B cell (primary cell): ENCODE measurements at regions of chr10 and their contacts with region 1.

Region 1: GRCh38 chr10:25707976-25708671 is 225.9 kb upstream of the MYO3A start:
- DNase-seq: no peak
- ATAC-seq: no peak
- H3K4me3 ChIP-seq: no peak overlapping the region
- H3K4me3 Mint-ChIP-seq: no peak overlapping the region
- H3K27ac ChIP-seq: no peak overlapping the region
- H3K27ac Mint-ChIP-seq: no peak overlapping the region
- H3K4me1 ChIP-seq: no peaks in the 10 kb centered on the region
- H3K4me1 Mint-ChIP-seq: no peaks in the 10 kb centered on the region
- H3K27me3 ChIP-seq: no peaks in the 10 kb centered on the region
- H3K27me3 Mint-ChIP-seq: peaks cover 17% of the 10 kb centered on the region
- CTCF ChIP-seq: no peak

Region 2: GRCh38 chr10:25068152-25069058 is 639.7 kb before region 1 on chr10:
- CTCF ChIA-PET with region 1: no interaction called
- POLR2A ChIA-PET with region 1: no interaction called
- intact Hi-C with region 1: no loop called
- DNase-seq: no peak
- ATAC-seq: no peak
- H3K4me3 ChIP-seq: no peak overlapping the region
- H3K4me3 Mint-ChIP-seq: no peak overlapping the region
- H3K27ac ChIP-seq: no peak overlapping the region
- H3K27ac Mint-ChIP-seq: no peak overlapping the region
- H3K4me1 ChIP-seq: no peaks in the 10 kb centered on the region
- H3K4me1 Mint-ChIP-seq: no peaks in the 10 kb centered on the region
- H3K27me3 ChIP-seq: peaks cover 0 to 6% (median 0%) of the 10 kb centered on the region in 4 experiments
- H3K27me3 Mint-ChIP-seq: peaks cover 22% of the 10 kb centered on the region
- CTCF ChIP-seq: no peak

Region 3: DNA sequence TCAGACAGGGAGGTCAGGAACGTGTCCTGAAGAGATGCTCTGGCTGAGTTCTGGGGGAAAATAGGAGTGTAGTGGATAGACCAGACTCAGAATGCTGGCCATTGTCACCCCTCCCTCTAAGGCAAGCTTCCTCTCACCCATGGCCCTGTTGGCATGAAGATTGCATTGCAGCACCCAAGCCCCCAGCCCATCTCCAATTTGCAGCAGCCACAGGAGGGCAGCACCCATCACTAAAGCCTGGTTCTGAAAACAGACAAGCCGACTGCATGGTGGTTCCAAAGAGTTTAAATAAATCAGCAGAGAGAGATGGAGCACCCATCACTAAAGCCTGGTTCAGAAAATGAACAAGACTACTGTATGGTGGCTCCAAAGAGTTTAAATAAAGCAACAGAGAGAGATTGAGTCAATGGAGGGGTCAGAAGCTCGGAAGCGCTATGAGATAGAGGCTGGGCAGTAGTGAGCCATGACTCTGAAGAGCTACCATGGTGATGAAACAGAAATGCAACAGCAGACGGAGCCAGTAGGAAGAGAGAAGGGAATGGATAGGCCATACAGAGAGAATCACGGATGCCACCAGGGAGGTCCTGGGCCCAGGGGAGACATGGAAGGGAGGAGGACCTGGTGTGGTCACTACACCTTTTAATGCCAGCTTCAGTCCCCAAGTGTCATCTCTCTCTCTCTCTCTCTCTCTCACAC is 12.0 kb before region 1 on chr10:
- CTCF ChIA-PET with region 1: interaction called, 12 read pairs
- POLR2A ChIA-PET with region 1: no interaction called
- intact Hi-C with region 1: no loop called
- DNase-seq: no peak
- ATAC-seq: no peak
- H3K4me3 ChIP-seq: no peak overlapping the region
- H3K4me3 Mint-ChIP-seq: peak overlapping the region; percentile 65
- H3K27ac ChIP-seq: no peak overlapping the region
- H3K27ac Mint-ChIP-seq: peak overlapping the region; percentile 7
- H3K4me1 ChIP-seq: peaks cover 60 to 61% of the 10 kb centered on the region in 2 donors
- H3K4me1 Mint-ChIP-seq: peaks cover 65% of the 10 kb centered on the region
- H3K27me3 ChIP-seq: no peaks in the 10 kb centered on the region
- H3K27me3 Mint-ChIP-seq: no peaks in the 10 kb centered on the region
- CTCF ChIP-seq: no peak